Breast epithelium (tissue), 4 donors: ENCODE measurements at regions of chr11 and their contacts with region 1.

Region 1: DNA sequence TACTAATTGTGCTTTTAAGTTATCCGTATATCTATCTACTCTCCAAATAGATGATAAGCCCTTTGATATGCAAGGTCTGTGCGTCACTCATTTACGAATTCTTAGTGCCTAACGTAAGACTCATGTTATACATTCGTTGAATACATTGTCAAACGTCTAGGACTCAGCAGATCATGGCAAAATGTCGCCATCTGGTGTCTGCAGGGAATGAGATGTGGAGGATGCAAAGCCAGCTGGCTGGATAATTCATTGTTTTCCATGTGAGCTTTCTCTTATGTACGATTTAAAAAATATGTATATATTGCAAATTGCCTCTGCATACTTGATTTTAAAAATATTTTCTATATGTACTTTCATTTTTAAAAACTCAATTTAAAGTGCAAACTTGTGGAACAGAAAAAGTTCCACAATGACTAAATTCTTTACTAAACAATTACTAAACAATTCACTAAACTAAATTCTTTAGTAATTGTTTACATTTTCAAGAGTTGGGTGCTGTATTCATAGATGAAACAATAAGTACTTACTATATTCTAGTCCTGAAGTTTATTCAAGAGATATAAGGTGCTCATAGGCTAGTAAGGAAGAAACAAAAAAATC is 33.8 kb downstream of the ZNF202 start:
- DNase-seq: peak in 1 of 2 donors; percentile 32
- H3K4me3 ChIP-seq: no peak overlapping the region
- H3K27ac ChIP-seq: no peak overlapping the region
- H3K4me1 ChIP-seq: no peaks in the 10 kb centered on the region
- H3K27me3 ChIP-seq: peaks cover 0 to 6% of the 10 kb centered on the region in 2 donors
- CTCF ChIP-seq: peak in 2 of 3 donors; percentile 55 to 56
- POLR2A ChIP-seq: no peak

Region 2: GRCh38 chr11:124799348-124800225 is 1091.9 kb after region 1 on chr11:
- intact Hi-C with region 1: loop called (anchors 5 kb)
- DNase-seq: no peak
- H3K4me3 ChIP-seq: peak overlapping the region; percentile 88 to 95 (median 94)
- H3K27ac ChIP-seq: peak overlapping the region; percentile 98 to 99
- H3K4me1 ChIP-seq: peaks cover 0 to 9% of the 10 kb centered on the region in 2 donors
- H3K27me3 ChIP-seq: no peaks in the 10 kb centered on the region
- CTCF ChIP-seq: no peak
- POLR2A ChIP-seq: no peak